ENCODE measurements at regions of chr9 and their contacts with region 1.

Region 1: DNA sequence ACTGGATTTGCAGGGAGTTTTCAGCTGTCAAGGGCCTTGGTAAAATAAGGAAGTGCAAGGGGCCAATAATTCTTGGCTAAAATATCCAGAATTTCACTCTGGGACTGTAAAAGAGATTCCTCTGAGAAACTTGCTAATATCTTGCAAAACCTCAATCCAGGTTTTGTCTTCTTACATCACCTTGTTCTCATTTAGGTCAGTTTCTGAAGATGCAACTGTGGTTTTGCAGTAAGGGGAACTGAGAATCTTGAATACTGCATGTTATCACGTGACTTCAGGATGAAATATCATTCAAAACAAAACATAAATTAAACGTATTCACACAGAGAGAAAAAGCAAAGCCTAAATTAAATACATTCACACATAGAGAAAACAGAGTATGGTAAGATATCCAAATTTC is 35.0 kb upstream of the RIC1 start:
- DNase-seq: no peak
- H3K4me3 ChIP-seq: no peak overlapping the region
- H3K27ac ChIP-seq: no peak overlapping the region
- H3K4me1 ChIP-seq: no peaks in the 10 kb centered on the region
- H3K27me3 ChIP-seq: no peaks in the 10 kb centered on the region
- CTCF ChIP-seq: no peak

Region 2: DNA sequence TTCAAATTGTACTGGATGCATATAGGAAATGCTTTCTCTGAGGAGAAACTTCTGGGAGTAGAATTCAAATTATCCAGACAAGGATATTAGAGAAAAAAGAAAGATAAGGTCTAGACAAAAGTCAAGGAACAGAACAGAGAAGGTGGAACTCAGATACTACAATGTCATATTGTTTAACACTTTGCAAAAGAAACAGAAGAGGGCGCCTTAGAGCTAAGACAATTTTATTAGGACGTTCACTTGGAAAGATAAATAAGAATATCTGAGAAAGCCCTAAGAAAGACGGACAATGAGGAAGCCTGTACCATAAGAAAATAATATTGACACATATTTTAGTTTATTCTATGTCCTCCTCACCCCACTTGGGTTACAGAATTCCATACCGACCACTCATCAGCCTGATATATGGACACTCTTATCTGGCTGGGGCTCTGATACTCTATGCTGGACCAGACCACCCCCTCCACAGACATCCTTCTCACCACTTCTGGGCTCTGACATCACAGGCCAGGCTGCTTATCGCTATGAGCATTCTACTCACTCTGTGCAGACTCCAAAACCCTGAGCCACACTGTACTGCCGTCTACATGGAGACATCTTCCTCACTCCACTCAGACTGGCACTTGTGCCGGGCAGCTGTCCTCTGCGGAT is 843.8 kb before region 1 on chr9:
- intact Hi-C with region 1: loop called (anchors 5 kb)
- DNase-seq: no peak
- H3K4me3 ChIP-seq: no peak overlapping the region
- H3K27ac ChIP-seq: no peak overlapping the region
- H3K4me1 ChIP-seq: no peaks in the 10 kb centered on the region
- H3K27me3 ChIP-seq: no peaks in the 10 kb centered on the region
- CTCF ChIP-seq: peak; percentile 51

Region 3: DNA sequence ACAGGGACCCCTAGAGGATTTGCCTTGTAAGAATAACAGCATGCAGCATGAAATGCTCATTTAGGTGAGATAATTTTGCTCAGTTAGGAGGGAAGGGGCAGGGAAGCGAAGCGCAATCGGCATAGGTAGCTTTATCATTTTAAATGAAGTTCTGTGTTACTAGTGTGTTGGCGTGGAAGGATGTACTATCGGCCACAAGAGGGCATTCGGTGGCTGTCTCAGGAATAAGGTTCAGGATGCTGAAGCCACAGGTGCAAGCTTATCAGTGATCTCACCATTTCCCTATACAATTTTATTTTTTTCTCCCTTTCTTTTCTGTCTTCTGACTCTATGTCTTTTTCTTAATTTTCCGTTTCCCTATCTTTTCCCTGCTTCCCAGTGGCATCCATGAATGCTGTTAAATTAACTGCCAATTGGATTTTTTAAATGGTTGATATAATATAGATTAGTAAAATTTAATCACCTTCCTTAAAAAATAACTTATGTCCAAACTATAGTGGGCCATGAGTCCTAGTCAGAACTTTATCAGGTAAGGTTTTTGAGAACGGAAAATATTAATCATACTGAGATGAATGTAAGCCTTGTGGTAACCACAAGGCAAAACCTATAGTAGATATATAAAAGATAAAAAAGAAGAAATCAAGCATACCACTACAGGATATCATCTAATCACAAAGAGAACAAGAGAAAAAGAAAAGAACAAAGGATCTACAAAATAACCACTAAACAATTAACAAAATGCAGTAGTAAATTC is 407.3 kb before region 1 on chr9:
- intact Hi-C with region 1: loop called (anchors 5 kb)
- DNase-seq: peak; percentile 55
- H3K4me3 ChIP-seq: no peak overlapping the region
- H3K27ac ChIP-seq: no peak overlapping the region
- H3K4me1 ChIP-seq: no peaks in the 10 kb centered on the region
- H3K27me3 ChIP-seq: no peaks in the 10 kb centered on the region
- CTCF ChIP-seq: peak; percentile 63

Region 4: GRCh38 chr9:5671711-5672353 is 77.9 kb after region 1 on chr9:
- intact Hi-C with region 1: no loop called
- DNase-seq: no peak
- H3K4me3 ChIP-seq: no peak overlapping the region
- H3K27ac ChIP-seq: no peak overlapping the region
- H3K4me1 ChIP-seq: peaks cover 3% of the 10 kb centered on the region
- H3K27me3 ChIP-seq: no peaks in the 10 kb centered on the region
- CTCF ChIP-seq: no peak